ENCODE measurements at regions of chr4 and their contacts with region 1.

Region 1: DNA sequence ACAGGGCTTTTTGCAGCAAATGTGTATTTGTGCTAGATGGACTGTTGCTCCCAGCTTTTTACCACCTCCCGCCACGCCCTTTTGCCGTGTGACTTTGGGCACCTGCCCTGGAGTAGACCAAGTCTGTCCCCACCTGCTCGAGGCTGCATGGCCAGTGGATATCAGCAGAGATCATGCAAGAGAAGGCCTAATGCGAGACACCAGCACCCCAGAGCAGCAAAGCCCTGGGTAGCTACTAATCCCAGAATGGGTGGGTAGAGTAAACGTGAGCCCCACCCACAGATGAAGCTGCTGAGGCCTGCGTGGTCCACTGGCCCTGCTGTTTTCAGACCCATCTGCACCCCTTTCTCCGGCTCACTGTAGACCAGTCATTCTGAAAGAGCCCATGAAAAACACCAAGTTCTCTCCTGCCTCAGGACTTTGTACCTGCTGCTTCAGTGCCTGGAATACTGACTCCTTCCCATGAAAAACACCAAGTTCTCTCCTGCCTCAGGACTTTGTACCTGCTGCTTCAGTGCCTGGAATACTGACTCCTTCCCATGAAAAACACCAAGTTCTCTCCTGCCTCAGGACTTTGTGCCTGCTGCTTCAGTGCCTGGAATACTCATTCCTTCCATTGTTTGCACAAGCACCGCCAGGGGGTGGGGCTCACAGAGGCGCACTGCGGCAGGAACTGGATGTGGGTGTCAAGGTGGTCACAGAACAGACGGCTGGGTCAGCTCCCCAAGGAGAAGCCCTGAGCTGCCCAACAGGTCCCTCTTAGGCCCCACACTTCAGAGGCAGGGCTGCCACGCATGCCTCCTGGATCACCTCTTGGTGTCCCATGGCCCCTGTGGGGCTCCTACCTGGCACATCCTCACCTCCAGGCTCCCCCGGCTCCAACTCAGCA is 5.1 kb upstream of the TNIP2 start:
- DNase-seq: peak; percentile 35
- ATAC-seq: peak; percentile 52
- H3K4me3 ChIP-seq: no peak overlapping the region
- H3K27ac ChIP-seq: no peak overlapping the region
- H3K4me1 ChIP-seq: no peaks in the 10 kb centered on the region; the same call in 1 of the 2 replicates
- H3K27me3 ChIP-seq: no peaks in the 10 kb centered on the region
- CTCF ChIP-seq: no peak

Region 2: DNA sequence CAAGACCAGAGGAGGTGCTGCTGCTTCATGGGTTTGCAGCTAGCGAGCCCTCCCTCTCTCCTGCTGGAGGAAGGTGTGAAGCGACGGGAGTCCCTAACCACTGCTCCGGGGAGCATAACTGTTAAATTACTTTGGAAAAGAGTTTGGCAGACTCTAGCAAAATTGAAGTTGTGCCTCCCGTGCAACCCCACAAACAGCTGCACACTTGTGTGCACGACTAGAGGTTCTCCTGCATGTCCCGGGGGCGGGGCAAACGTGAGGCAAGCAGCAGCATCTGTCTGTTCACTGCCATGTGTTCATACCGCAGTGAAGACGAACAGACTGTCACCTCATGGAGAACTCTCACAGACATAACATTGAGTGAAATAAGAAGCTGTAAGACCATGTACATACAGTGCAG is 39.7 kb before region 1 on chr4:
- CTCF ChIA-PET with region 1: no interaction called
- POLR2A ChIA-PET with region 1: no interaction called
- intact Hi-C with region 1: no loop called
- DNase-seq: no peak
- ATAC-seq: no peak
- H3K4me3 ChIP-seq: no peak overlapping the region
- H3K27ac ChIP-seq: no peak overlapping the region
- H3K4me1 ChIP-seq: no peaks in the 10 kb centered on the region
- H3K27me3 ChIP-seq: no peaks in the 10 kb centered on the region
- CTCF ChIP-seq: no peak

Region 3: DNA sequence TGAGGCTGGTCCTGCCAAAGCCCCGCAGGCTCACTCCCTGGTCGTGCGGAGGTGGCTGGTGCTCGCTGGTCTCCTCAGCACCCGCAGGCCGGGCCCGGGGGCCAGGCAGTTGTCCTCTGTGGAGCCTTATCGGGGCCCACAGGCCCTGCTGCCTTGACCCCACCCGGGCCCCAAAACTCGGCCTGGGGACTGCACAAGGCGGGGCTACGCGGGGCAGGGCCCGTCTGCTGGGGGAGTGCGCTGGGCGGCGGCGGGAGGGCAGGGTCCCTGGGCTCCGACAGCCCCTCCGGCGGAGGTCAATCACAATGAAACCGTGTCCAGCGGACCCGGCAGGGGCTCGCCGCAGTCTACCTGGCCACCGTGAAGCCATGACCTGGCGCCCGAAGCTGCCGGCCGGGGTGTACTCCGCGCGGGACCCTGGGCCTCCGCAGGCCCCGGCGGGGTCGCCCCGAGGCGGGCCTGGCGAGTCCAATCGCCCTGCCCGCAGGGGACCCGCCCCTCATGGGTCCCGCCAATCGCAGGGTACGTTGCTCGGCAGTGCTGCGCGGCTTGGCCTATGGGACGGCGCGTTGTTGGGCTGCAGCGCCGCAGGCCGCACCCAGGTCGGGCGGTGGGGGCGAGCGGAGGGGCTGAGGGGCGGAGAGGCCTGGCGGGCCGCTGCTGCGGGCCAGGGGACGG is 82.1 kb after region 1 on chr4 and contains the start of gene ADD1:
- CTCF ChIA-PET with region 1: interaction called, 9 read pairs
- POLR2A ChIA-PET with region 1: no interaction called
- intact Hi-C with region 1: loop called (anchors 10 kb)
- DNase-seq: peak; percentile 91
- ATAC-seq: peak; percentile 81
- H3K4me3 ChIP-seq: peak within 1 kb of the TSS; percentile 97
- H3K27ac ChIP-seq: no peak within 1 kb of the TSS
- H3K4me1 ChIP-seq: peaks cover 14% of the 10 kb centered on the region
- H3K27me3 ChIP-seq: no peaks in the 10 kb centered on the region
- CTCF ChIP-seq: no peak
- total RNA-seq, gene ADD1: 118 and 124 TPM in 2 replicates

Region 4: DNA sequence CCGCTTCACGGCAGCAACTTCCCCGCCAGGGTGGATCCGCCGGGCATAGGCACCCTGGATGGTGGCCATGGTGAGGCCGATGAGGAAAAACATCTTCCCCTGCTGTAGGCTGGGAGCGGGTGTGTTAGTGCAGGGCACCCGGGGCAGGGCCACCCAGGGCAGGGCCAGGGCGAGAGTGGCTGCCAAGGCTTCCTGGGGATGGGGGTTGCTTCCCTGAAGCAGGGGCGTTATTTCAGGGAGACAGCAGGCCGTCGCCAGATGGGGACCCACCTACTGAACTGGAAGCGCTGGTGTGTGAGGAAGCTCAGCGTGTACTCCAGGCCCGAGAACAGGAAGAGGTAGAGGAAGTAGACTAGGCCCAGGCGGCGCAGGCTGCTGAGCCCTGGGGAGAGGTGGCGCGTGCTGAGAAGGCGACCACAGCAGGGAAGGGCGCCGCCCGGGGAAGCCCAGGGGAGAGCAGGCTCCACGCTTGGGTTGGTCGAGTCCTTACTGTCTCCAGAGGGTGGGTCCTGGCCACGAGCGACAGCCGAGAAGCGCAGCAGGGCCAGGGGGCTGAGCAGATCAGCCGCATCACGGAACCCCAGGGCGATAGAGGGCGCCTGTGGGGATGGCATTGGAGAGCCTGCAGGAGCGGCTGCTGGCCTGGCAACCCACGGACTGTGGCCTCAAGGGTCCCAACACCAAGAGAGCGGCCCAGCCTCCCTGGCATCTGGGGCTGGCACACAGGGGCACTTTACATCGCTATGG is 170.4 kb after region 1 on chr4:
- CTCF ChIA-PET with region 1: no interaction called
- POLR2A ChIA-PET with region 1: no interaction called
- intact Hi-C with region 1: loop called (anchors 2 kb)
- DNase-seq: no peak
- ATAC-seq: no peak
- H3K4me3 ChIP-seq: no peak overlapping the region
- H3K27ac ChIP-seq: no peak overlapping the region
- H3K4me1 ChIP-seq: peaks cover 23% of the 10 kb centered on the region
- H3K27me3 ChIP-seq: no peaks in the 10 kb centered on the region
- CTCF ChIP-seq: no peak

Measured in PC-3 (cell line).